H1 (cell line): ENCODE measurements at regions of chr2 and their contacts with region 1.

Region 1: DNA sequence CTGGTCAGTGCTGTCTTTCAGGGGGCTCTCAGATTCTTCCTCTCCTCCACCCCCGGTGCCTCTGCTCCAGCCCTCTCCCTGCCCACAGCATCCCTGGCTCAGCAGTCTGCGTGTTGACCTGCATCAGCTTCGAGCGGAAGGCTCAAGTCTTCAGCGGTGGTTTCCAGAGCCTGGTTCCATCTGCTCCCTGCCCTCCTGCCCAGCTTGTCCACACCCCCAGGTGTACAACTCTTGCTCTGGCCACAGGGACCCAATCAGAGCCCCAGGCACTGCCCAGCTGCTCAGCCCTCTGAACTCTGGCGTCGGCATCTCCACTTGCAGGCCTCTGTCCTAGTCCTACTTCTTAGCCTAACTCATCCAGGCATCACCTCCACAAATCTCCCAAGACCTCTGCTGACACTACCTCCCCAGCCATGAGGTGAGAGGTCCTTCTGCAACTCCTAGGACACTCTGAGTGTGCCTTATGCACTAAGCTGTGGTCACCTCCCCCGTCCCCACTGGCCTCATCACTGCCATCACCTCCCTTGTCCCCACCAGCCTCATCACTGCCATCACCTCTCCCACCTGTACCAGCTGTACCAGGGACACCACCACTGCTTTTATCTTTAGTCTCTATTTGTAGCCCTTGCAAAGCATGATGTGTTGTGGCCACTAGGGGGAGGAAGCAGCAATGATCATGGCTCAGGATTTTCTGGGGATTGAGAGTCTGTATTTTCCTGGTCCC is 60.9 kb downstream of the EDAR start:
- DNase-seq: no peak
- H3K4me3 ChIP-seq: no peak overlapping the region
- H3K27ac ChIP-seq: no peak overlapping the region
- H3K4me1 ChIP-seq: no peaks in the 10 kb centered on the region; a peak in 2 of 7 replicates
- H3K27me3 ChIP-seq: no peaks in the 10 kb centered on the region
- CTCF ChIP-seq: peak; percentile 19 to 87 (median 81)
- EP300 ChIP-seq: no peak
- POLR2A ChIP-seq: no peak
- RAD21 ChIP-seq: peak; percentile 74 to 80

Region 2: GRCh38 chr2:108477099-108477498 is 451.0 kb before region 1 on chr2:
- CTCF ChIA-PET with region 1: no interaction called
- POLR2A ChIA-PET with region 1: no interaction called
- DNase-seq: no peak
- H3K4me3 ChIP-seq: no peak overlapping the region
- H3K27ac ChIP-seq: no peak overlapping the region
- H3K4me1 ChIP-seq: no peaks in the 10 kb centered on the region
- H3K27me3 ChIP-seq: no peaks in the 10 kb centered on the region
- CTCF ChIP-seq: no peak
- EP300 ChIP-seq: no peak
- POLR2A ChIP-seq: no peak
- RAD21 ChIP-seq: no peak

Region 3: GRCh38 chr2:108701806-108702205 is 226.3 kb before region 1 on chr2:
- CTCF ChIA-PET with region 1: no interaction called
- POLR2A ChIA-PET with region 1: no interaction called
- DNase-seq: no peak
- H3K4me3 ChIP-seq: no peak overlapping the region
- H3K27ac ChIP-seq: no peak overlapping the region
- H3K4me1 ChIP-seq: no peaks in the 10 kb centered on the region
- H3K27me3 ChIP-seq: no peaks in the 10 kb centered on the region
- CTCF ChIP-seq: no peak
- EP300 ChIP-seq: no peak
- POLR2A ChIP-seq: no peak
- RAD21 ChIP-seq: no peak

Region 4: DNA sequence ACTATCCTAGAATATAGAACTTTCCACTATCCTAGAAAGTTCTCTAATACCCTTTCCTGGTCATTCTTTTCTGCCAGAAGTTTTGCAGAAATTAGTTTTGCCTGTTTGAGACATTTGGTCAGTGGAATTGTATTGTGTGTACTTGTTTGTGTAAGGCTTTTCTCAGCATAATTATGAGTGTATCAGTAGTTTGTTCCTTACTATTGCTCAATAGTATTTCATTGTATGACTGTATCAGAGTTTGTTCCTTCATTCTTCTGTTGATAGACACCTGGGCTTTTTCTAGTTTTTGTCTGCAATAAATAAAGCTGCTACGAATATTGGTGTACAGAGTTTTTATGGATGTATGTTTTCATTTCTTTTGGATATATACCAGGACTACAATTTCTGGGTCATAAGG is 114.4 kb before region 1 on chr2:
- CTCF ChIA-PET with region 1: no interaction called
- POLR2A ChIA-PET with region 1: no interaction called
- DNase-seq: no peak
- H3K4me3 ChIP-seq: no peak overlapping the region
- H3K27ac ChIP-seq: no peak overlapping the region
- H3K4me1 ChIP-seq: no peaks in the 10 kb centered on the region
- H3K27me3 ChIP-seq: no peaks in the 10 kb centered on the region
- CTCF ChIP-seq: no peak
- EP300 ChIP-seq: no peak
- POLR2A ChIP-seq: no peak
- RAD21 ChIP-seq: no peak

Region 5: GRCh38 chr2:108877506-108877905 is 50.6 kb before region 1 on chr2:
- CTCF ChIA-PET with region 1: no interaction called
- POLR2A ChIA-PET with region 1: no interaction called
- DNase-seq: no peak
- H3K4me3 ChIP-seq: no peak overlapping the region
- H3K27ac ChIP-seq: no peak overlapping the region
- H3K4me1 ChIP-seq: no peaks in the 10 kb centered on the region
- H3K27me3 ChIP-seq: no peaks in the 10 kb centered on the region
- CTCF ChIP-seq: no peak
- EP300 ChIP-seq: no peak
- POLR2A ChIP-seq: no peak
- RAD21 ChIP-seq: no peak

Region 6: GRCh38 chr2:108910541-108911396 is 17.3 kb before region 1 on chr2:
- CTCF ChIA-PET with region 1: interaction called, 38 read pairs
- POLR2A ChIA-PET with region 1: no interaction called
- DNase-seq: peak in 1 of 2 experiments; percentile 31
- H3K4me3 ChIP-seq: no peak overlapping the region
- H3K27ac ChIP-seq: no peak overlapping the region
- H3K4me1 ChIP-seq: no peaks in the 10 kb centered on the region
- H3K27me3 ChIP-seq: no peaks in the 10 kb centered on the region
- CTCF ChIP-seq: no peak
- EP300 ChIP-seq: no peak
- POLR2A ChIP-seq: no peak
- RAD21 ChIP-seq: no peak

Region 7: DNA sequence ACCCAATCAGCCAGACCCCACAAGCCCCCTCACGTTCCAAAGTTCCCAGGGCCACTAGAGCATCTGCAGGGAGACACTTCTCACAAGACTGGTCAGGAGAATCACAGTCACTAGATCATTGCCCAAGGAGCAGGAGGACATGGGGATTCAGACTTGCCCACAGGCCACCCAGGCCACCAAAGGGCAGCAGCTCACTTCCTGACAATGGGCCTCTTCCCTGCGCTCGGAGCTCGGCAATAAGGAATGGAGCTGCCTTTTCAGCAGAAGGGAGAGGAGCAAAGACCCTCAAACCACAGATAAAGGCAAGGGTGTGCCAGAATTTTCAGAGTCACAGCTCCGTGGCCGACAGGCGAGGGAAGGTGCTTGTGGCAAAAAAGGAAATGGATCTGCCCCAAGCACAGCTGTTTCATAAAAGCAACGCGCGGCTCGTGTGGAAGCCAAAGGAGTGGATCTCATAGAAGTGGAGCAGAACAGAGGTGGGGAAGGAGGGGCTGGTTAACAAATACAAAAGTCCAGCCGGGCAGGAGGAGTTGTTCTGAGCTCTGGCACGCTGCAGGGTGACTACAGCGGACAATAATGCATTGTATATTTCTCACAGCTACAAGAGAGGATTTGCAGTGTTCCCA is 11.2 kb before region 1 on chr2:
- CTCF ChIA-PET with region 1: interaction called, 38 read pairs
- POLR2A ChIA-PET with region 1: no interaction called
- DNase-seq: no peak
- H3K4me3 ChIP-seq: no peak overlapping the region
- H3K27ac ChIP-seq: no peak overlapping the region
- H3K4me1 ChIP-seq: no peaks in the 10 kb centered on the region
- H3K27me3 ChIP-seq: no peaks in the 10 kb centered on the region
- CTCF ChIP-seq: no peak
- EP300 ChIP-seq: no peak
- POLR2A ChIP-seq: no peak
- RAD21 ChIP-seq: no peak

Region 8: GRCh38 chr2:108944601-108945331 is 16.7 kb after region 1 on chr2:
- CTCF ChIA-PET with region 1: interaction called, 15 read pairs
- POLR2A ChIA-PET with region 1: no interaction called
- DNase-seq: no peak
- H3K4me3 ChIP-seq: no peak overlapping the region
- H3K27ac ChIP-seq: no peak overlapping the region
- H3K4me1 ChIP-seq: no peaks in the 10 kb centered on the region
- H3K27me3 ChIP-seq: no peaks in the 10 kb centered on the region
- CTCF ChIP-seq: peak; percentile 23 to 63 (median 40)
- EP300 ChIP-seq: no peak
- POLR2A ChIP-seq: no peak
- RAD21 ChIP-seq: peak; percentile 40 to 44; a peak in 3 of 4 replicates